CD4-positive, alpha-beta T cell (primary cell): ENCODE measurements at regions of chr1 and their contacts with region 1.

Region 1: DNA sequence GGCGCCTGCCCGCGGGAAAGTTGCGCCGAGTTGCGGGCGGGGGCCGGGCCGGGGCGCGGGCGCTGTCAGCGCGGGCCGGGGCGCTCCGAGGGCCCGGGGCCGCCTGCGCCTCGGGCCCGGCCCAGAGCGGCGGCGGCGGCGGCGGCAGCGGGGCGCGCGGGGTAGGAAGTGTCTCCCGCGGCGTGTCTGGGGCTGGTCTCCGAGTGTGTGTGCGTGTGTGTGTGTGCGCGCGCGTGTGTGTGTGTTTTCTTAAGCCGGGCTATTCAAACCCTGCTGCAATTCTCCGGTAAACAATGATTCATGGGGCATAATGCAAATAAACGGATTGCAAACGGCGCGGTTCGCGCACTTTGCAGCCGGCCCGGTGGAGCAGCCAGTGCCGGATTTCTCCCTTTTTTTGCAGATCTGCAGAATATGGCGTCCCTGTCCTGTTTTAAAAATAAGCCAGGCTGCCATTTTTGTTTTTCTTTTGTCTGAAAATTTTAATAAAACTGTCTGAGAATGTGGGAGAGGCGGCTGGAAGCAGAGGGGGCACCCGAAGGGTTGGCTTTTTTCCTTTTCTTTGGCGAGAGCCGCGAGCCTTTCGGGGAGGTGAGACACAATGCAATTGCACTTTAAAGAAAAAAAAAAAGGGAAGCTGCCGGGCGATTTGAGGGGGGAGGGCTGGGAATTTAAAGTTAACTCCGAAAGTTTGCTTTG is 558 bp downstream of the ZNF362 start:
- DNase-seq: peak; percentile 35 to 79 (median 52)
- ATAC-seq: peak; percentile 68
- H3K4me3 ChIP-seq: peak overlapping the region; percentile 84
- H3K4me3 Mint-ChIP-seq: peak overlapping the region; percentile 97
- H3K27ac ChIP-seq: peak overlapping the region in 1 of 2 donors; percentile 49
- H3K27ac Mint-ChIP-seq: peak overlapping the region; percentile 98
- H3K4me1 ChIP-seq: peaks cover 49% of the 10 kb centered on the region
- H3K4me1 Mint-ChIP-seq: peaks cover 41% of the 10 kb centered on the region
- H3K27me3 ChIP-seq: no peaks in the 10 kb centered on the region
- H3K27me3 Mint-ChIP-seq: no peaks in the 10 kb centered on the region
- CTCF ChIP-seq: no peak

Region 2: DNA sequence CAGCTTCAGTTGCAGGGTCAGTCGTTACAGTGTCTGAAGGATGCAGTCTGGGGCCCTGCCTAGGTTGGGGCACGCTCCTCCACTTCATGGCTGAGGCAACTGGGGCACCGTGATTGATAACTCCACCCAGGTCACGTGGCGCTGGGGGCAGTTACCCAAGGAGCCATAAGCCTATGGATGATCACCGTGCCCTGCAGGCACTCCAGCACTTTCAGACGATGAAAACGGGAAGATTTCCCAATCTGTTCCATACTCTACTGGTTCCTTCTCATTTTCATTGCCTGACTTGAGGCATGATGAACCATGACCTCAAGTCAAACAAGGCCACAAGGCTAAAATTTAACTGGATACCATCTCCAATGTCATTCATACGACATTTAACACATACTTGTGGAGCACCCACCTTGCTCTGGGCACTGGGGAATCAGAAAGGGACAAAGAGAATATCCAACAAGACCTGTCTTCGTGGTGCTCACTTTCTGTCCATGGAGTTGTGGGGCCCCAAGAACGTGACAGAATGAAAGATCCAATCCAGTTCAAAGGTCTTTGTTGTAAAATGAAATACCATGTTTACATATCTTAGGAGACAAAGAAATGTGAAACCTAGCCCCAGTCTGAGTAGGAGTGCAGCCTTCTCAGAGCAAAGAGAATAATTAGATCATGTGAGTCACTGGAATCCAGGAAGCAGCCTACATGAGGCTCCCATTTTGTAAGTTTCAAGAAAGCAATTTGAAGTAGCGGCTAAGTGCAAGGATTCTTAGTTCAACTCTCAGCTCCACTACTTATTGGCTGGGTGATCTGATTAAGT is 1401.6 kb before region 1 on chr1:
- CTCF ChIA-PET with region 1: no interaction called
- POLR2A ChIA-PET with region 1: no interaction called
- intact Hi-C with region 1: no loop called
- DNase-seq: no peak
- ATAC-seq: no peak
- H3K4me3 ChIP-seq: no peak overlapping the region
- H3K4me3 Mint-ChIP-seq: no peak overlapping the region
- H3K27ac ChIP-seq: no peak overlapping the region
- H3K27ac Mint-ChIP-seq: no peak overlapping the region
- H3K4me1 ChIP-seq: peaks cover 13% of the 10 kb centered on the region
- H3K4me1 Mint-ChIP-seq: peaks cover 21% of the 10 kb centered on the region
- H3K27me3 ChIP-seq: no peaks in the 10 kb centered on the region
- H3K27me3 Mint-ChIP-seq: no peaks in the 10 kb centered on the region
- CTCF ChIP-seq: no peak

Region 3: DNA sequence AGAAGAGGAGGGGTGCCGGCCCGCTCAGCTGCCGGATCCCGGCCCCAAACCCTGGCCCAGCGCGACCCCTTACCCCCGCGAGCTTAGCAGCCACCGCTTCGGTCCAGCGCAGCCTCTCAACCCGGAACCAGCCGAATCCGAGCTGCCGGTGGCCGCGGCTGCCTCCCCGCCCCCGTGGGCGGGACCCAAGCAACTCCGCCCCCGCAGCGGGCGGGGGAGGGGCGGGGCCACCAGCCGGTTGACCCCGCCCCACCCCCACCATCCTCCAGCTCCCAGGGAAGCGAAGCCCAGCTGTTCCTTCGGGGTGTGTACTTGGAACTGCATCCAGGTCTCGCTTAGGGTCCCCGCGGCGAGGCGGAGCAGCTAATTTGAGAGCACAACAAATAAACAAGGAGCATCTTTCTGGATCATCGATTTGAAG is 74.9 kb before region 1 on chr1 and contains the start of gene TRIM62:
- CTCF ChIA-PET with region 1: no interaction called
- POLR2A ChIA-PET with region 1: interaction called, 10 read pairs
- intact Hi-C with region 1: loop called in 1 of 2 experiments (anchors 5 kb)
- DNase-seq: peak; percentile 60 to 89 (median 72)
- ATAC-seq: peak; percentile 71
- H3K4me3 ChIP-seq: peak within 1 kb of the TSS; percentile 88
- H3K4me3 Mint-ChIP-seq: peak within 1 kb of the TSS; percentile 93
- H3K27ac ChIP-seq: peak within 1 kb of the TSS in 1 of 2 donors; percentile 30
- H3K27ac Mint-ChIP-seq: peak within 1 kb of the TSS; percentile 62
- H3K4me1 ChIP-seq: peaks cover 23% of the 10 kb centered on the region
- H3K4me1 Mint-ChIP-seq: peaks cover 34% of the 10 kb centered on the region
- H3K27me3 ChIP-seq: peaks cover 0 to 3% of the 10 kb centered on the region in 2 experiments
- H3K27me3 Mint-ChIP-seq: no peaks in the 10 kb centered on the region
- CTCF ChIP-seq: no peak
- total RNA-seq, gene TRIM62: 18.9 to 23.0 TPM

Region 4: GRCh38 chr1:33219881-33220661 is 36.8 kb before region 1 on chr1:
- CTCF ChIA-PET with region 1: no interaction called
- POLR2A ChIA-PET with region 1: no interaction called
- intact Hi-C with region 1: no loop called
- DNase-seq: no peak
- ATAC-seq: no peak
- H3K4me3 ChIP-seq: no peak overlapping the region
- H3K4me3 Mint-ChIP-seq: no peak overlapping the region
- H3K27ac ChIP-seq: no peak overlapping the region
- H3K27ac Mint-ChIP-seq: no peak overlapping the region
- H3K4me1 ChIP-seq: no peaks in the 10 kb centered on the region
- H3K4me1 Mint-ChIP-seq: no peaks in the 10 kb centered on the region
- H3K27me3 ChIP-seq: no peaks in the 10 kb centered on the region
- H3K27me3 Mint-ChIP-seq: peaks cover 6% of the 10 kb centered on the region
- CTCF ChIP-seq: no peak

Region 5: DNA sequence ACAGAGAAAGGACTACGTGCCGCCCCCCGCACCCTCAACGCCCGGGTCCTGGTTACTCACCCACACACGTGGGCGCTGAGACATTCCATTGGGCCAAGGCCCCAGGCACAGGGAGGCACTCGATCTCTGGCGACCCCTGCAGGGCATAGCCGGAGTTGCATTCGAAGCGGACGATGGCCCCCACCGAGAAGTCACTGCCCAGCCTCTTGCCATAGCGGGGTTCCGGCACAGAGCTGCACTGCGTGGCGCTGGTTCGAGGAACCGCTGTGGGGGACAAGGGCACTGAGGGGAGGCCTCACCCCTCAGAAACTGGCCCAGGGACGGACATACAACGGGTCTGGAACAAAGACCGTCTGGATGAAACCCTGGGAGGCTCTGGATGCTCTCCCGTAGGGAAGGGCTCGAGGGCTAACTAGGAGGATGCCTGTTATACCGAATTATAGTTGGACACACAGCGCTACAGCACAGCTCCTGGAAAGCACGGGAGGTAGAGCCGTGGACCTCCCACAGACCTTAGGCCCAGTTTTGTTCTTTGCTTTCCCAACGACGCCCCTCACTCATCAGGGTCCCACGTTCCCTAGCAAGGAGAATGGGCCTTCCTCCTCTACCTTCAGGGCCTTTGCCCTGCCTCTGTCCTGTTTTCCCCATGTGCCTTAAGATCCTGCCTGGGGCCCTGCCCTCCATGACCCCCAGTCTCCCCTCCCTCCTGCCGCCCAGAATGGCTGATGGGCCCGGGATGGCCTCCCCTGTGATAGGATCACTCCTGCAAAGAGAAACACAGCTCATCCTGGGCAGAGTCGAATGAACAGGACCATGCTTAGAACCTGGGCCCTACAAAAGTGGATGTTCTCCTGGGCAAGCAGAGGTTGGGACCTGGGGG is 368.4 kb after region 1 on chr1:
- CTCF ChIA-PET with region 1: no interaction called
- POLR2A ChIA-PET with region 1: no interaction called
- intact Hi-C with region 1: no loop called
- DNase-seq: peak in 1 of 14 experiments; percentile 21
- ATAC-seq: no peak
- H3K4me3 ChIP-seq: no peak overlapping the region
- H3K4me3 Mint-ChIP-seq: no peak overlapping the region
- H3K27ac ChIP-seq: no peak overlapping the region
- H3K27ac Mint-ChIP-seq: no peak overlapping the region
- H3K4me1 ChIP-seq: no peaks in the 10 kb centered on the region
- H3K4me1 Mint-ChIP-seq: no peaks in the 10 kb centered on the region
- H3K27me3 ChIP-seq: peaks cover 3 to 15% of the 10 kb centered on the region in 2 experiments
- H3K27me3 Mint-ChIP-seq: peaks cover 45% of the 10 kb centered on the region
- CTCF ChIP-seq: peak; percentile 35